ENCODE measurements at regions of chr4 and their contacts with region 1.

Region 1: DNA sequence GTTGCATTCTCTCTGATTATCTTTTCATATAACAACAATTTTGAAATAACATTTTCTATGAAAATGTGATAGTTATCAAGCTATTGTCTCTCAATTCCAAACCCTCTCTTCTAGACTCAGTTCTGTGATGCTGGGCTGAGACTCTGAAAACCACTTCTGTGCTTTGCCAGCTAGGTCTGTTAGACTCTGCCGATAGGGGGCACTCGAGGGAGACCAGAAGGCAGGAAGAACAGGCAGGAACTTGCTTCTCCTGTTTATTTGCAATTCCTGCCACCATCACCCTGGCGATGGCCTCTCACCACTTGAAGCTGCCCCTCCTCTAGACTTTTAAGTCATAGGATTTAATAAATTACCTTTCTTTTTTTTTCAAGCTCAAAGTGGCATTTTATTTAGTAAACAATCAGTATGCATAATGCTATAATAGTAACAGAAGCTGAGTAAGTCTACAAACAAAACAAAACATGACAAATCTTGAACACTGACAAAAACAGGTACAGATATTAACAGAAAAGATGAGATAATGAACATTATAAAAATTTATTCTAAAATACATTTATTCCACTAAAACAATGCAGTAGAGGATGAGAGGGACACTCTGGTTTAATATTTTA is 49.7 kb downstream of the RASL11B start:
- DNase-seq: peak; percentile 58
- H3K4me3 ChIP-seq: peak overlapping the region in 1 of 2 experiments; percentile 7; a peak in 1 of 4 replicates
- H3K27ac ChIP-seq: no peak overlapping the region
- H3K4me1 ChIP-seq: peaks cover 0 to 12% of the 10 kb centered on the region in 2 experiments; a peak in 2 of 4 replicates
- H3K27me3 ChIP-seq: no peaks in the 10 kb centered on the region
- CTCF ChIP-seq: peak; percentile 73
- EP300 ChIP-seq: no peak
- RAD21 ChIP-seq: peak; percentile 71

Region 2: GRCh38 chr4:52894443-52894842 is 17.3 kb before region 1 on chr4:
- CTCF ChIA-PET with region 1: interaction called, 22 read pairs
- POLR2A ChIA-PET with region 1: no interaction called
- DNase-seq: no peak
- H3K4me3 ChIP-seq: no peak overlapping the region
- H3K27ac ChIP-seq: peak overlapping the region in 1 of 2 experiments; percentile 75; a peak in 1 of 4 replicates
- H3K4me1 ChIP-seq: no peaks in the 10 kb centered on the region; a peak in 1 of 4 replicates
- H3K27me3 ChIP-seq: no peaks in the 10 kb centered on the region
- CTCF ChIP-seq: no peak
- EP300 ChIP-seq: peak in 1 of 2 experiments; percentile 51; a peak in 1 of 4 replicates
- RAD21 ChIP-seq: no peak

Region 3: DNA sequence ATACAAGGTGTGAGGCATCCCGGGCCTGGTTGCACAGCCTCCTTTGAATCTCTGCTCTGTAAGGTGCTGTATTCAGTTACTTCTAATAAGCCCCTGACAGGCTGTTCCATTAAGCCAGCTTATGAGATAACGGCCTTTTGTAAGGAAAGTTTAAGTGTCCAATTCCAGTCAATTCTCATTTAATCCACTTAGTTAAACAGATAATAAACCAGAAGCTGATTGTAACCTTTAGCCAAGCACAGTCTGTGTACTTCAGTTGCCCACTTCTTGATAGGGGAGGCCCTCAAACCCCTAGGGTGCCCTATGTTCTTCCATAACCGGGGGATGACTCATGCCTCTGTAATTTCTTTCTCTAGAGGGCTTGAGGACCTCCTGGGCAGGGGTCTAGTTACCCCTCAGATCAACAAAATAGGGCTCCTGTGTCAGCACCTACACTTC is 13.8 kb after region 1 on chr4:
- CTCF ChIA-PET with region 1: interaction called, 24 read pairs
- POLR2A ChIA-PET with region 1: no interaction called
- DNase-seq: no peak
- H3K4me3 ChIP-seq: no peak overlapping the region
- H3K27ac ChIP-seq: no peak overlapping the region; a peak in 1 of 4 replicates
- H3K4me1 ChIP-seq: peaks cover 4 to 12% of the 10 kb centered on the region in 2 experiments; a peak in 3 of 4 replicates
- H3K27me3 ChIP-seq: no peaks in the 10 kb centered on the region
- CTCF ChIP-seq: no peak
- EP300 ChIP-seq: no peak
- RAD21 ChIP-seq: no peak

Region 4: GRCh38 chr4:52943677-52944076 is 31.9 kb after region 1 on chr4:
- CTCF ChIA-PET with region 1: interaction called, 12 read pairs
- POLR2A ChIA-PET with region 1: no interaction called
- DNase-seq: no peak
- H3K4me3 ChIP-seq: no peak overlapping the region
- H3K27ac ChIP-seq: no peak overlapping the region; a peak in 1 of 4 replicates
- H3K4me1 ChIP-seq: peaks cover 0 to 17% of the 10 kb centered on the region in 2 experiments; a peak in 2 of 4 replicates
- H3K27me3 ChIP-seq: no peaks in the 10 kb centered on the region
- CTCF ChIP-seq: no peak
- EP300 ChIP-seq: no peak
- RAD21 ChIP-seq: no peak

Region 5: DNA sequence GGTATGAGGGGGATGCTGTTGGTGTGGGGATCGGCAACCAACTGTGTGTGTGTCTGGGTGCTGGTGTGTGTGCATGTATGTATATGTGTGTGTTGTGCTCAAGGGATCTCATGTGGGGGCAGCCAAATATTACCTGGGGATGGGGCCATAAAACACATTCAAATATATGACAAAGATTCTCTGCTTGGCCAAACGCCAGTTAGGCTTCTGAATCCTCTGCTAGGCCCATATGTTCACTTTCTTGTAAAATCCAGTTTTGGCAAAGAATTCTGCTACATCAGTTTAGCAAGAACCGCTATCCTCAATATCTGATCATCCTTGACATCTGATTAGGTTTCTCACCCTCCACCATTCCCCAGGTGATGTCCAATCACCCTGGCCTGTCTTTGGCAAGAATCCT is 56.9 kb after region 1 on chr4:
- CTCF ChIA-PET with region 1: no interaction called
- POLR2A ChIA-PET with region 1: no interaction called
- DNase-seq: no peak
- H3K4me3 ChIP-seq: no peak overlapping the region
- H3K27ac ChIP-seq: no peak overlapping the region
- H3K4me1 ChIP-seq: peaks cover 0 to 7% of the 10 kb centered on the region in 2 experiments; a peak in 2 of 4 replicates
- H3K27me3 ChIP-seq: no peaks in the 10 kb centered on the region
- CTCF ChIP-seq: no peak
- EP300 ChIP-seq: no peak
- RAD21 ChIP-seq: no peak

Measured in SK-N-SH (cell line).